ENCODE measurements at regions of chr2 and their contacts with region 1.

Region 1: DNA sequence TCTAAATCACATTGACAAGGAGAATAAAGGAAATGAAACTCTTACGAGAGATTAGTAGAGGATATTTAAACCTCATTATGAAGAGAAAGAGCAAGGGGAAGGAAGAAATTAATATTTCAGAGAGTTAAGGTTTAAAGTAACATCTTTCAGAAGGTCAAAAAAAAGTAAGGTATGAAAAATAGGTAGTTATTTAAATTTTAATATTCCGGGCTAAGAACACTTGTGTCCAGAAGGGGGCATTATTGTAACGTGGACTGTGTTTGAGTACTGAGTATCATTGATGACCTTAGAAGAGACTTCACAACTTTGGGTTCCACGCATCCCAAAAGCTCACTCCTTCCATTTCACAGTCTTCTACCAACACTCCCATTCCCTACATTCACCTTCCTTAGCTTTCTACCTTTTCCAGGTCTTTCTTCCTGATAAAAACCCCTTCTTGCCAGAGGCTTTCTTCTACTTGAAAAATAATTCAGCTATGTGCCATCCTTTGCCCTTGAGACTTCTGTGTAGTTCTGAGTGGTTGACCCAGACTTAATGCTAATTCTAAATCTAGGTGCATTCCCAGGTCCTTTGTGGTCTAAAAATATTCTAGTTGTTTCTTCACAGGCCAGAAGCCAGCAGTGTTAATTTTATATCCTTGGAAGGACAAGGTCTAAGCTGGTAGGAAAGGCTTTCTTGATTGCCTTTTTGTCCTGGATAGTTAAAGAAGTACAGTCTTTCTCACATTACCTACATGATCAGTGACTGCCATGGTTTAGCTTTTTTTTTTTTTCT is 16.5 kb downstream of the DYNC1I2 start:
- DNase-seq: no peak
- ATAC-seq: peak; percentile 82
- H3K4me3 ChIP-seq: no peak overlapping the region
- H3K27ac ChIP-seq: no peak overlapping the region
- H3K4me1 ChIP-seq: no peaks in the 10 kb centered on the region
- H3K27me3 ChIP-seq: no peaks in the 10 kb centered on the region
- CTCF ChIP-seq: peak; percentile 43 to 53 (median 51); a peak in 5 of 6 replicates
- EP300 ChIP-seq: no peak
- POLR2A ChIP-seq: no peak
- RAD21 ChIP-seq: peak; percentile 62

Region 2: DNA sequence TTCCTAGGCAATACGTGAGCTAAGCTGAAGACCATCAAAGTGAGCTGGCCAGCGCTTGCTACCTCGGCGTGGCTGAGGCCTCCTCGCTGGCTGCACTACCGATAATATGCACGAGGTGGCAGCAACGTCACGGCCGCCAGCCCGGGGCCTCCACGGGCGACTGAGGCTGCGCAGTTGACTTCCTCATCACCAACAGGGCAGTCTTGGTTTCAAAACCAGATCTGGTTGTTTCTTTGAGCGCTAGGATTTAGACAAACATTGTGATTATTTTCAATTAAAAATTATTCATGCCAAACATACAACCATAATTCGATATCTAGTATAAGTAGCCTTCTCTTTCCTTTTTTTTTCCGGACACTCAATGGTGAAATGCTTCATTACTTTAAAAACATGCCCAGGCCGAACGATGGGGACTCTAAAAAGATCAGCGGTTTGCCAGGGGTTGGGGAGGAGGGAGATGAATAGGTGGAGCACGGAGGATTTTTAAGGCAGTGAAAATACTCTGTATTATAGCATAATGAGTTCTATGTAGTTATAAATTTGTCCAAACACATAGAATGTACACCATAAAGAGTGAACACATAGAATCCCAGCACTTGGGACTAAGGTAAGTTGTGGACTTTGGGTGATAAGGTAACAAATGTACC is 129.5 kb before region 1 on chr2:
- CTCF ChIA-PET with region 1: interaction called, 17 read pairs
- POLR2A ChIA-PET with region 1: no interaction called
- RAD21 ChIA-PET with region 1: interaction called, 3 read pairs
- SMC1A ChIA-PET with region 1: interaction called, 8 read pairs
- in situ Hi-C with region 1: no loop called
- intact Hi-C with region 1: no loop called
- DNase-seq: peak; percentile 32
- ATAC-seq: peak; percentile 100
- H3K4me3 ChIP-seq: no peak overlapping the region
- H3K27ac ChIP-seq: no peak overlapping the region
- H3K4me1 ChIP-seq: no peaks in the 10 kb centered on the region
- H3K27me3 ChIP-seq: peaks cover 0 to 1% of the 10 kb centered on the region in 2 experiments; a peak in 1 of 4 replicates
- CTCF ChIP-seq: peak; percentile 94 to 97 (median 95); a peak in 5 of 6 replicates
- EP300 ChIP-seq: no peak
- POLR2A ChIP-seq: no peak
- RAD21 ChIP-seq: peak; percentile 81

Region 3: GRCh38 chr2:171687287-171688128 is 16.3 kb before region 1 on chr2 and contains the start of gene DYNC1I2:
- CTCF ChIA-PET with region 1: interaction called, 154 read pairs
- POLR2A ChIA-PET with region 1: interaction called, 4 read pairs
- RAD21 ChIA-PET with region 1: interaction called, 19 read pairs
- SMC1A ChIA-PET with region 1: interaction called, 34 read pairs
- in situ Hi-C with region 1: no loop called
- intact Hi-C with region 1: no loop called
- DNase-seq: peak; percentile 91
- ATAC-seq: peak; percentile 96
- H3K4me3 ChIP-seq: peak within 1 kb of the TSS; percentile 86
- H3K27ac ChIP-seq: peak within 1 kb of the TSS; percentile 80
- H3K4me1 ChIP-seq: no peaks in the 10 kb centered on the region
- H3K27me3 ChIP-seq: no peaks in the 10 kb centered on the region
- CTCF ChIP-seq: no peak
- EP300 ChIP-seq: no peak
- POLR2A ChIP-seq: peak; percentile 48; the same call in 1 of the 2 replicates
- RAD21 ChIP-seq: no peak
- polyA plus RNA-seq, gene DYNC1I2: 39.9 to 67.5 TPM

Region 4: GRCh38 chr2:171811245-171811628 is 107.5 kb after region 1 on chr2:
- CTCF ChIA-PET with region 1: interaction called, 12 read pairs
- POLR2A ChIA-PET with region 1: no interaction called
- RAD21 ChIA-PET with region 1: interaction called, 3 read pairs
- SMC1A ChIA-PET with region 1: interaction called, 3 read pairs
- in situ Hi-C with region 1: no loop called
- intact Hi-C with region 1: no loop called
- DNase-seq: no peak
- ATAC-seq: 0 out of 3 replicates have a peak, but pooled peaks have one; percentile 25
- H3K4me3 ChIP-seq: no peak overlapping the region
- H3K27ac ChIP-seq: no peak overlapping the region
- H3K4me1 ChIP-seq: no peaks in the 10 kb centered on the region
- H3K27me3 ChIP-seq: no peaks in the 10 kb centered on the region
- CTCF ChIP-seq: peak in 2 of 3 experiments; percentile 35 to 48; a peak in 3 of 6 replicates
- EP300 ChIP-seq: no peak
- POLR2A ChIP-seq: no peak
- RAD21 ChIP-seq: peak; percentile 67

Region 5: GRCh38 chr2:172113617-172114016 is 409.9 kb after region 1 on chr2:
- CTCF ChIA-PET with region 1: interaction called, 212 read pairs
- POLR2A ChIA-PET with region 1: no interaction called
- RAD21 ChIA-PET with region 1: interaction called, 12 read pairs
- SMC1A ChIA-PET with region 1: interaction called, 4 read pairs
- in situ Hi-C with region 1: loop called (anchors 5 kb)
- intact Hi-C with region 1: no loop called
- DNase-seq: no peak
- ATAC-seq: peak; percentile 68
- H3K4me3 ChIP-seq: no peak overlapping the region
- H3K27ac ChIP-seq: no peak overlapping the region
- H3K4me1 ChIP-seq: no peaks in the 10 kb centered on the region
- H3K27me3 ChIP-seq: 0 out of 4 replicates have a peak, but pooled peaks cover 0 to 1% of the 10 kb centered on the region in 2 experiments
- CTCF ChIP-seq: peak in 2 of 3 experiments; percentile 33 to 55; a peak in 4 of 6 replicates
- EP300 ChIP-seq: no peak
- POLR2A ChIP-seq: no peak
- RAD21 ChIP-seq: peak; percentile 59

Region 6: GRCh38 chr2:172465417-172466334 is 761.9 kb after region 1 on chr2:
- CTCF ChIA-PET with region 1: interaction called, 15 read pairs
- POLR2A ChIA-PET with region 1: no interaction called
- RAD21 ChIA-PET with region 1: interaction called, 10 read pairs
- SMC1A ChIA-PET with region 1: interaction called, 6 read pairs
- in situ Hi-C with region 1: no loop called
- intact Hi-C with region 1: loop called (anchors 5 kb)
- DNase-seq: no peak
- ATAC-seq: peak; percentile 65
- H3K4me3 ChIP-seq: no peak overlapping the region
- H3K27ac ChIP-seq: no peak overlapping the region
- H3K4me1 ChIP-seq: peaks cover 8% of the 10 kb centered on the region
- H3K27me3 ChIP-seq: peaks cover 0 to 5% of the 10 kb centered on the region in 2 experiments; a peak in 3 of 4 replicates
- CTCF ChIP-seq: peak; percentile 76 to 79 (median 76)
- EP300 ChIP-seq: no peak
- POLR2A ChIP-seq: no peak
- RAD21 ChIP-seq: peak; percentile 86